Activated T-helper 1 cell treated with anti-CD3 and anti-CD28 coated beads, Interleukin-12 subunit alpha, Interleukin-12 subunit beta, Interleukin-2, Interleukin-4 antibody, amounts not matched to agents 30 ng/mL and 10 ng/mL and 1 ng/mL, durations not matched to agents 14 hours and 24 hours and 36 hours (primary cell): ENCODE measurements at regions of chr18 and their contacts with region 1.

Region 1: GRCh38 chr18:49021433-49022129 is 70.8 kb upstream of the SMAD7 start:
- DNase-seq: peak; percentile 28
- H3K4me3 Mint-ChIP-seq: no peak overlapping the region
- H3K27ac Mint-ChIP-seq: no peak overlapping the region
- H3K4me1 Mint-ChIP-seq: no peaks in the 10 kb centered on the region
- H3K27me3 Mint-ChIP-seq: no peaks in the 10 kb centered on the region

Region 2: GRCh38 chr18:49238433-49239042 is 217.0 kb after region 1 on chr18:
- intact Hi-C with region 1: loop called (anchors 1 kb)
- DNase-seq: no peak
- H3K4me3 Mint-ChIP-seq: no peak overlapping the region
- H3K27ac Mint-ChIP-seq: no peak overlapping the region
- H3K4me1 Mint-ChIP-seq: no peaks in the 10 kb centered on the region
- H3K27me3 Mint-ChIP-seq: no peaks in the 10 kb centered on the region

Region 3: DNA sequence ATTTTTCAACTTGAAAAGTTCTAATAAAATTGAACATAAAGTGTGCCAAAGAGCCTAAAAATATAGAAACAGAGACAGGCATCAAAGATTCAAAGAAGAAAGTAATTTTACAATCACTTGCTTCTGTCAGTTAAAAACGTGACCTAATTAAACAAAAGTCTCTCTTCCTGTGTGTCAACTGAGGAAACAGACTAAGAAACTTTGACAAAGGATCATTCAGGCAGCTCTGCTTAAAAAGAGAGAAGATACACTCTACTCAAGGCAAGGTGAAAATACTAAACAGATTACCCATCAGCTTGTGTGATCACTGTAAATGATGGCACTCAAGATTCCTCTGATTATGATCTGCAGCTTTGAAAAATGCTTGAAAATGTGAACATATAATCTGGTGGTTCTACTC is 391.1 kb after region 1 on chr18:
- intact Hi-C with region 1: loop called (anchors 1 kb)
- DNase-seq: no peak
- H3K4me3 Mint-ChIP-seq: no peak overlapping the region
- H3K27ac Mint-ChIP-seq: peak overlapping the region; percentile 9
- H3K4me1 Mint-ChIP-seq: peaks cover 24% of the 10 kb centered on the region
- H3K27me3 Mint-ChIP-seq: no peaks in the 10 kb centered on the region